ENCODE measurements at regions of chr20 and their contacts with region 1.

Region 1: GRCh38 chr20:49054056-49054643 is 8.0 kb downstream of the CSE1L start:
- DNase-seq: no peak
- H3K4me3 ChIP-seq: no peak overlapping the region
- H3K27ac ChIP-seq: no peak overlapping the region
- H3K4me1 ChIP-seq: peaks cover 14% of the 10 kb centered on the region
- H3K27me3 ChIP-seq: no peaks in the 10 kb centered on the region
- CTCF ChIP-seq: no peak

Region 2: GRCh38 chr20:47258745-47259695 is 1795.1 kb before region 1 on chr20:
- CTCF ChIA-PET with region 1: no interaction called
- dilution Hi-C with region 1: no loop called
- in situ Hi-C with region 1: no loop called
- intact Hi-C with region 1: loop called (anchors 5 kb)
- DNase-seq: peak; percentile 77
- H3K4me3 ChIP-seq: no peak overlapping the region
- H3K27ac ChIP-seq: peak overlapping the region; percentile 59
- H3K4me1 ChIP-seq: peaks cover 18% of the 10 kb centered on the region
- H3K27me3 ChIP-seq: no peaks in the 10 kb centered on the region
- CTCF ChIP-seq: no peak

Region 3: GRCh38 chr20:48738399-48739304 is 315.5 kb before region 1 on chr20:
- CTCF ChIA-PET with region 1: no interaction called
- dilution Hi-C with region 1: no loop called
- in situ Hi-C with region 1: no loop called
- intact Hi-C with region 1: no loop called
- DNase-seq: no peak
- H3K4me3 ChIP-seq: no peak overlapping the region
- H3K27ac ChIP-seq: no peak overlapping the region
- H3K4me1 ChIP-seq: no peaks in the 10 kb centered on the region
- H3K27me3 ChIP-seq: no peaks in the 10 kb centered on the region
- CTCF ChIP-seq: no peak

Region 4: GRCh38 chr20:48823960-48824497 is 230.1 kb before region 1 on chr20:
- CTCF ChIA-PET with region 1: no interaction called
- dilution Hi-C with region 1: no loop called
- in situ Hi-C with region 1: no loop called
- intact Hi-C with region 1: no loop called
- DNase-seq: peak; percentile 90
- H3K4me3 ChIP-seq: no peak overlapping the region
- H3K27ac ChIP-seq: no peak overlapping the region
- H3K4me1 ChIP-seq: peaks cover 10% of the 10 kb centered on the region
- H3K27me3 ChIP-seq: peaks cover 16% of the 10 kb centered on the region
- CTCF ChIP-seq: no peak